Breast epithelium (tissue), 4 donors: ENCODE measurements at regions of chr4 and their contacts with region 1.

Region 1: GRCh38 chr4:42271096-42271495 is 118.6 kb upstream of the BEND4 start:
- DNase-seq: no peak
- H3K4me3 ChIP-seq: no peak overlapping the region
- H3K27ac ChIP-seq: no peak overlapping the region
- H3K4me1 ChIP-seq: no peaks in the 10 kb centered on the region
- H3K27me3 ChIP-seq: no peaks in the 10 kb centered on the region
- CTCF ChIP-seq: no peak
- POLR2A ChIP-seq: no peak

Region 2: DNA sequence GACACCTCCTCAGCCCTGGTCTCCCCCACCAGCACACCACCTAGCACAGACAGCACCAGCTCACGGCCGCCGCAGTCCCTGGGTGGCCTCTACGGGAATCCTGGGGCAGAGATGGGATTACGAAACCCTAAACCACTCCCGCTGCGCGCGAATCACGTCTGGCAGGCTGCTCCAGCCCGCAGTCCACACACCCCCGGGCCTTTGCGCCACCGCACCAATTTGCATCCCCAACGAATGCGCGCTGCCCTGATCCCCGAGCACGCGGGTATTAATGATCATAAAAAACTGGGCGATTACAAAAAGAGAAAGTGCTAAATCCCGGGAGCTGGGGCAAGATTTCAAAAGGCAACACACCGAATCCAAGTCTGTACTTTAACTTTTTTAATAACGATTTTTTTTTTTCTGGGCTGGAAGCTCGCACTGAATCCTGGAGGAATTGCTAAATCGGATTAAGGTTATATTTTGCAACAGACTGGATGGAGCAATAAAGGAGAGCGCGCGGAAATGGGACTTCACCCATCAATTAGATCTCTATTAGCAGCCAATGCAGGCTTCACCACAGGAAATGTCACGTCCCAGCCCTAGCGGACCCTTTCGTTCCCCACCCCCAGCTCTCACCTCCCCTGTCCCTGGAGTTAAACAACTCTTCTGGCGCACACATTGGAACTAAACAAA is 405.7 kb before region 1 on chr4:
- intact Hi-C with region 1: no loop called
- DNase-seq: no peak
- H3K4me3 ChIP-seq: no peak overlapping the region
- H3K27ac ChIP-seq: no peak overlapping the region
- H3K4me1 ChIP-seq: no peaks in the 10 kb centered on the region
- H3K27me3 ChIP-seq: peaks cover 0 to 43% of the 10 kb centered on the region in 2 donors
- CTCF ChIP-seq: no peak
- POLR2A ChIP-seq: no peak

Region 3: DNA sequence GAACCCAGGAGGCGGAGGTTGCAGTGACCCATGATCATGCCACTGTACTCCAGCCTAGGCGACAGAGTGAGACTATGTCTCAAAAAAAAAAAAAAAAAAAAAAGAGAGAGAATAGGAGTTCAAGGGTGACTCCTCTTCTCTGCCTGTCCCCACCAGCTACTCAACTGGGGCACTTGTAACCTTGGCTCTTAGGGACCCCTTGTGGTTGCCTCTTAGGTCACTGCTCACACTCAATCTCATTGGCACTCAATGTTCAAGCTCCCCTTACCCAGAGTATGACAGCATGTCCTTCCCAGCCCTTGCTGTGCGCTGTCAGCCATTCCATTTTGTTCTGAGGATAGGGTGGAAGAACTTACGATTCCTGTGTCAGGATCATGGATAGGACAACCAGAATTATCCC is 36.3 kb before region 1 on chr4:
- intact Hi-C with region 1: no loop called
- DNase-seq: no peak
- H3K4me3 ChIP-seq: no peak overlapping the region
- H3K27ac ChIP-seq: no peak overlapping the region
- H3K4me1 ChIP-seq: no peaks in the 10 kb centered on the region
- H3K27me3 ChIP-seq: no peaks in the 10 kb centered on the region
- CTCF ChIP-seq: no peak
- POLR2A ChIP-seq: no peak

Region 4: DNA sequence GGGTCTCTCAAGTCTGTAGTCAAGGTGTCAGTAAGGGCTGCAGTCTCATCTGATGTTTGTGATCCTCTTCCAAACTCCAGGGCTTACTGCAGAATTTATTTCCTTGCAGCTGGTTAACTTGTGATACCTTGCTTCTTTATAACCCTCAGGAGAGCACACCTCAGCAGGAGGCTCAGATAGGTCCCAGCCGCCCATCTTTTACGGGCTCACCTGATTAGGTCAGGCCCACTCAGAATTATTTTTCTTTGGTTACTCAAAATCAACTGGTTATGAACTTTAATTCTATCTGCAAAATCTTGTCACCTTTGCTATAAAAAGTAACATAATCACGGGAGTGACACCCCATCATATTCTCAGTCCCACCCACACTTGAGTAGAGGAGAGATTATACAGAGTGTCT is 18.8 kb before region 1 on chr4:
- intact Hi-C with region 1: no loop called
- DNase-seq: no peak
- H3K4me3 ChIP-seq: no peak overlapping the region
- H3K27ac ChIP-seq: no peak overlapping the region
- H3K4me1 ChIP-seq: no peaks in the 10 kb centered on the region
- H3K27me3 ChIP-seq: no peaks in the 10 kb centered on the region
- CTCF ChIP-seq: no peak
- POLR2A ChIP-seq: no peak

Region 5: DNA sequence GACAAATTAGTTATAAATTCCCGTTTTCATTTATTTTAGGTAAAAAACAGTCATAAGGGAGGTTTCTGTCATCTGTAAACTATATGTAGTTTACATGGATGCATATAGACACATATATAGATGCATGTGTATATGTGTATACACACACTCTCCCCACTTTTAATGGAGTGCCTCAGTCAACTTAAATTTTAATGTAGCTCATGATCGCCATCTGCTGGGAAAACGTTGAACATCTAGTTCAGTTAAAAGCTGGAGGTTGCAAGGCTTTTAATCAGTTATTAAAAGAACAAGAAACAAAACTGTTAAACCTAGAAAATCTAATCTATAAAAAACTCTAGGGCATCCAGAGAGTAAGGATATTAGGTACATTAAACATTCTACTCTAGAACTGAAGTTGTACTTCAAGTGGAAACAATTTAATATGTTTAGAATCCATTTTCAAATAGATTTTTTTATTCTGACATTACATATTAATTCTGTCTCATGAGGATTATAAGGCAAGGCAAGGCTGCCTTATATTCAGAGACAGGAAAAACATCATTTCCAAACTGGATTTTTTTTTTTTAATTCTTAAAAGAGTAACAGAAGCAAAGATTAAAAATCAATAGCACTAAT is 248.8 kb after region 1 on chr4:
- intact Hi-C with region 1: loop called (anchors 5 kb)
- DNase-seq: no peak
- H3K4me3 ChIP-seq: no peak overlapping the region
- H3K27ac ChIP-seq: no peak overlapping the region
- H3K4me1 ChIP-seq: no peaks in the 10 kb centered on the region
- H3K27me3 ChIP-seq: no peaks in the 10 kb centered on the region
- CTCF ChIP-seq: peak in 2 of 3 donors; percentile 59 to 65
- POLR2A ChIP-seq: no peak